ENCODE measurements at regions of chr22 and their contacts with region 1.

Region 1: GRCh38 chr22:33302049-33302545 is 243.9 kb upstream of the SYN3 start:
- DNase-seq: peak; percentile 76
- H3K4me3 ChIP-seq: no peak overlapping the region
- H3K27ac ChIP-seq: no peak overlapping the region
- H3K4me1 ChIP-seq: no peaks in the 10 kb centered on the region
- H3K27me3 ChIP-seq: no peaks in the 10 kb centered on the region
- CTCF ChIP-seq: peak; percentile 90

Region 2: DNA sequence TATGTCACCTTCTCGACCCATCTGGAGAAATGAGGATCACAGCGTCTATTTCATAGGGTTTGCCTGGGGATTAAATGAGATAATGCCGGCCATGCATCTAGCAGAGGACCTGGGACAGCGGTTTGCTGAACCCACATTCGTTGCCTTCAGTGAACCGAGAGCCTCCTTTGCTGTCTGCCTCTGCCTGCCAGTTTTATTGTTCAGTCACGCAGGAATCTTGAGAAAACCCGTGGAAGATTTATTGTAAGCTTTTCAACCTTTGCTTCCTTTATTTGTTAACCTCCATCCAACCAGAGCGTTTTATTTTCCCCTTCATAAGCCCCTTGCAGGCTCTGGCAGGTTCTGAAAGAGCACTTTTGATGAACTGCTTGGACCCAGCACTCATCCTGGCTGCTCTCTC is 41.6 kb before region 1 on chr22:
- CTCF ChIA-PET with region 1: no interaction called
- POLR2A ChIA-PET with region 1: no interaction called
- intact Hi-C with region 1: no loop called
- DNase-seq: no peak
- H3K4me3 ChIP-seq: no peak overlapping the region
- H3K27ac ChIP-seq: no peak overlapping the region
- H3K4me1 ChIP-seq: no peaks in the 10 kb centered on the region
- H3K27me3 ChIP-seq: no peaks in the 10 kb centered on the region
- CTCF ChIP-seq: no peak

Region 3: GRCh38 chr22:33635766-33636165 is 333.7 kb after region 1 on chr22:
- CTCF ChIA-PET with region 1: no interaction called
- POLR2A ChIA-PET with region 1: no interaction called
- intact Hi-C with region 1: no loop called
- DNase-seq: no peak
- H3K4me3 ChIP-seq: no peak overlapping the region
- H3K27ac ChIP-seq: no peak overlapping the region
- H3K4me1 ChIP-seq: no peaks in the 10 kb centered on the region
- H3K27me3 ChIP-seq: no peaks in the 10 kb centered on the region
- CTCF ChIP-seq: no peak

Region 4: DNA sequence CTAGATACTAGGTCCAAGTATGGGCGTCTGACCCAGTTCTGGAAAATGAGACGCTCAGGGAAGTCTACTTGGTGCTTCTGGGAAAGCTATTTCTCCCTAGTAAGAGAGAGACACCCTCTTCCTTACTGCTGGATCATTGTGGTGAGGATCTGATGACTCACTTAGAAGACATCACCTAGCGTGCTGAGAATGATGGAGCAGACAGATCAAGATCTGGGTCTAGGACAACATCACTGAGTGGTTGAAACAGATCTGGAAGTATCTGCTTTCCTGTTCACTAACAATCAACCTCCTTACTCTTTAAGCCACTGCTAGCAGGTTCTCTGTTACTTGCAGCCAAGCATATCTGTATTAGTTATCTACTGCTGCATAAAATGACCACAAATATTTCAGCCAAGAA is 1916.9 kb after region 1 on chr22:
- CTCF ChIA-PET with region 1: no interaction called
- POLR2A ChIA-PET with region 1: no interaction called
- intact Hi-C with region 1: loop called (anchors 10 kb)
- DNase-seq: no peak
- H3K4me3 ChIP-seq: no peak overlapping the region
- H3K27ac ChIP-seq: no peak overlapping the region
- H3K4me1 ChIP-seq: no peaks in the 10 kb centered on the region
- H3K27me3 ChIP-seq: no peaks in the 10 kb centered on the region
- CTCF ChIP-seq: no peak

Measured in A673 (cell line).